Ovary (tissue), 10 donors: ENCODE measurements at regions of chr9 and their contacts with region 1.

Region 1: GRCh38 chr9:126500684-126501382 is 112.9 kb upstream of the LMX1B start:
- DNase-seq: peak; percentile 75 to 87 (median 84)
- H3K4me3 ChIP-seq: no peak overlapping the region
- H3K27ac ChIP-seq: no peak overlapping the region
- H3K4me1 ChIP-seq: peaks cover 5% of the 10 kb centered on the region
- H3K27me3 ChIP-seq: no peaks in the 10 kb centered on the region
- CTCF ChIP-seq: peak; percentile 85 to 98 (median 91)
- EP300 ChIP-seq: no peak
- POLR2A ChIP-seq: no peak

Region 2: GRCh38 chr9:126558051-126558665 is 57.3 kb after region 1 on chr9:
- intact Hi-C with region 1: loop called (anchors 2 to 5 kb)
- DNase-seq: peak; percentile 17 to 65 (median 52)
- H3K4me3 ChIP-seq: no peak overlapping the region
- H3K27ac ChIP-seq: no peak overlapping the region
- H3K4me1 ChIP-seq: no peaks in the 10 kb centered on the region
- H3K27me3 ChIP-seq: no peaks in the 10 kb centered on the region
- CTCF ChIP-seq: peak; percentile 38 to 73 (median 46)
- EP300 ChIP-seq: no peak
- POLR2A ChIP-seq: no peak